WTC11 (cell line): ENCODE measurements at regions of chr9 and their contacts with region 1.

Region 1: GRCh38 chr9:2857564-2858198 is 13.8 kb upstream of the PUM3 start:
- DNase-seq: peak; percentile 72
- ATAC-seq: peak; percentile 84
- H3K4me3 Mint-ChIP-seq: no peak overlapping the region
- H3K27ac Mint-ChIP-seq: no peak overlapping the region
- H3K4me1 Mint-ChIP-seq: peaks cover 10% of the 10 kb centered on the region
- H3K27me3 Mint-ChIP-seq: peaks cover 3% of the 10 kb centered on the region
- CTCF ChIP-seq: peak; percentile 69

Region 2: GRCh38 chr9:2838371-2839000 is 19.2 kb before region 1 on chr9:
- CTCF ChIA-PET with region 1: interaction called, 12 read pairs
- POLR2A ChIA-PET with region 1: no interaction called
- DNase-seq: no peak
- ATAC-seq: no peak
- H3K4me3 Mint-ChIP-seq: no peak overlapping the region
- H3K27ac Mint-ChIP-seq: peak overlapping the region; percentile 55
- H3K4me1 Mint-ChIP-seq: peaks cover 7% of the 10 kb centered on the region
- H3K27me3 Mint-ChIP-seq: no peaks in the 10 kb centered on the region
- CTCF ChIP-seq: no peak